PC-9 (cell line): ENCODE measurements at regions of chr2 and their contacts with region 1.

Region 1: DNA sequence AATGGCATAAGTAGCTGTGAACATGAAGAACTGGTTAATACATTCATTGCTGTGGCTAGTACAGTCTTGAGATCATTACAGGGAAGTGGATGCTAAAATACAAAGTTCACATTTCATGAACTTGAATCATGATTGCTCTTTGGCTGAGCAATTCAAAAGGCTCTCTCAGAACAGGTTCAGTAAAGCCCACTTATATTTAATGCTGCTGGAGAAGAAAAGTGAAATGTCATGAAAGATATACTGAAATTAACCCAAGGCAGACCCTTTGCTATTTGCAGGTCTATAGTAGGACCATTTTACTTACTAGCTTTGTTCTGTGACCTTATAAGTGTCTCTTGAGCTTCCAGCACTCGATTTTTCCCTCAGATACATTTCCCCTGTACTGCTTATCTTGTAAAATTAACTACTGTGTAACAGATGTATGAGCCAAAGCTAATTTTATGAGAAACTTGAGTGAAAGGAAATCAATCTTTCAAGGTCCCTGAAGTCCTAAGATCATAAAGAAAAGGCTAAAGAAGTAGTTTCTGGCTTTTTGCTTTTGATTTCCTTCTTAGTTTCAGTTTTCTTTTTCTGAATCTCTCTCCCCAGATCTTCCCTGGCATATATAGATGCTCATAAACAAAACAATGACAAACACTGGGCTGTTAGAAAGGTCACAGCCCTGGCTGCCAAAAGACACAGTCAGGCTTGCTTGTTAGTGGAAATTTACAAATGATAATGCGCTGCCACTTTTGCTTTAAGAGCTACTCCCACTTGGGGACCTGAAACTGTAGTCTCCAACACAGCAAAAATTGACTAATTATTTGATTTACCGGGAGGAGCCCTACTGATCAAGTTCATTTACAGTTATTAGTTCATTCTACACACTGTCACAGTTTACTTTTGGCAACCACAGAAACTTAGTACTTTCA is 132.7 kb upstream of the XPO1 start:
- DNase-seq: peak; percentile 33 to 93
- H3K4me3 ChIP-seq: peak overlapping the region; percentile 46
- H3K27ac ChIP-seq: peak overlapping the region; percentile 98
- H3K4me1 ChIP-seq: peaks cover 34% of the 10 kb centered on the region
- H3K27me3 ChIP-seq: no peaks in the 10 kb centered on the region
- CTCF ChIP-seq: no peak

Region 2: GRCh38 chr2:61689568-61689967 is 18.7 kb after region 1 on chr2:
- CTCF ChIA-PET with region 1: no interaction called
- POLR2A ChIA-PET with region 1: no interaction called
- intact Hi-C with region 1: no loop called
- DNase-seq: no peak
- H3K4me3 ChIP-seq: no peak overlapping the region
- H3K27ac ChIP-seq: no peak overlapping the region
- H3K4me1 ChIP-seq: peaks cover 7% of the 10 kb centered on the region; the same call in 1 of the 2 replicates
- H3K27me3 ChIP-seq: no peaks in the 10 kb centered on the region
- CTCF ChIP-seq: no peak

Region 3: GRCh38 chr2:61727746-61728145 is 56.9 kb after region 1 on chr2:
- CTCF ChIA-PET with region 1: no interaction called
- POLR2A ChIA-PET with region 1: interaction called, 12 read pairs
- intact Hi-C with region 1: no loop called
- DNase-seq: no peak
- H3K4me3 ChIP-seq: no peak overlapping the region
- H3K27ac ChIP-seq: no peak overlapping the region
- H3K4me1 ChIP-seq: no peaks in the 10 kb centered on the region
- H3K27me3 ChIP-seq: no peaks in the 10 kb centered on the region
- CTCF ChIP-seq: no peak